Psoas muscle (tissue), 8 donors: ENCODE measurements at regions of chr7 and their contacts with region 1.

Region 1: DNA sequence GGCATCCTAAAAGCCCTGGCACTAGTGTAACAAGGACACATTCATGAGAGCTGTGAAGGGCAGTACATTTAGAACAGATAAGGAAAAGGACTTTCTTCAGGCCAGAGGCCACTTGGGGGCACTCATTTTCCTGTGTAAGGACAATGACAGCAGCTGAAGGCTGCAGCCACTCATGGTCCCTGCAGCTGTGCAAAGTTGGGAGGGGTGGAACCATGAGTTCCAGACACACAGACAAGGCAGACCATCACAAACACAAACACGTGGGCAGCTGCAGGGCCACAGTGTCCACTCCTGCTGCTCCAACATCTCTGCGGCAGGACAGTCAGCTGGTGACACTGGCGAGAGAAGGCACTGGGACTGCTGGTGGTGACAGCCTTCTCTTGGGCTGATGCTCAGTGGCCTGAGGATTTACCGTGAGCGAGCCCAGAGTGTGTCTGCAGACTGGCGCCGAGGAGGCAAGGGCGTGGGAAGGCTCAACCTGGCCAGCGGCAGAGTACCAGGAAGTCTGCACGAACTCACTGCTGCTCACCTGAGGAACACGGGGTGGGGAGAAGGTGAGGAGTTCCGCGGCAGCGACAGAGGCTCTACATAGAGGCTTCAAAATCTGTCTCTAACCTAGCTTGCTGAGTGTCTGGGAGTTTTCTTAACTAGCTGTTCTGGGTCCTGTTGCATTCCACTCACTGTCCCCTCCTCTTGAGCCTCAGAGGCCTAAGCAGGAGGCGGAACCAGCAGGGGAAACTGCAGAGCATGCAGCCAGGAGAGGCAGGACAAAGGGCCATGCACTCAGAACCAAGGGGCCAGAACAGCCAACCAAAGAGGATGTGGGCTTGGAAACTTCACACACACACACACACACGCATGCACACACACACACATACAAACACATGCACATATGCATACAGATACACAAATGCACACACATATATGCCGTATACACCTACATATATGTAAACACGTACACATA is 76.5 kb upstream of the DDC start:
- DNase-seq: peak; percentile 45 to 86
- ATAC-seq: peak; percentile 89 to 91 (median 89)
- H3K4me3 ChIP-seq: peak overlapping the region; percentile 45
- H3K27ac ChIP-seq: peak overlapping the region; percentile 76
- H3K4me1 ChIP-seq: peaks cover 48% of the 10 kb centered on the region
- H3K27me3 ChIP-seq: no peaks in the 10 kb centered on the region
- CTCF ChIP-seq: peak; percentile 42

Region 2: GRCh38 chr7:50588937-50589336 is 52.8 kb before region 1 on chr7:
- intact Hi-C with region 1: no loop called
- DNase-seq: no peak
- ATAC-seq: peak in 3 of 4 donors; percentile 24 to 56 (median 50)
- H3K4me3 ChIP-seq: no peak overlapping the region
- H3K27ac ChIP-seq: no peak overlapping the region
- H3K4me1 ChIP-seq: peaks cover 8% of the 10 kb centered on the region
- H3K27me3 ChIP-seq: no peaks in the 10 kb centered on the region
- CTCF ChIP-seq: no peak

Region 3: GRCh38 chr7:50653126-50653864 is 11.6 kb after region 1 on chr7:
- intact Hi-C with region 1: loop called in 1 of 2 experiments (anchors 2 kb)
- DNase-seq: peak; percentile 73 to 87
- ATAC-seq: peak; percentile 20 to 61 (median 48)
- H3K4me3 ChIP-seq: peak overlapping the region; percentile 37
- H3K27ac ChIP-seq: peak overlapping the region; percentile 96
- H3K4me1 ChIP-seq: peaks cover 63% of the 10 kb centered on the region
- H3K27me3 ChIP-seq: no peaks in the 10 kb centered on the region
- CTCF ChIP-seq: no peak